Heart right ventricle (tissue), 16 donors: ENCODE measurements at regions of chr17 and their contacts with region 1.

Region 1: DNA sequence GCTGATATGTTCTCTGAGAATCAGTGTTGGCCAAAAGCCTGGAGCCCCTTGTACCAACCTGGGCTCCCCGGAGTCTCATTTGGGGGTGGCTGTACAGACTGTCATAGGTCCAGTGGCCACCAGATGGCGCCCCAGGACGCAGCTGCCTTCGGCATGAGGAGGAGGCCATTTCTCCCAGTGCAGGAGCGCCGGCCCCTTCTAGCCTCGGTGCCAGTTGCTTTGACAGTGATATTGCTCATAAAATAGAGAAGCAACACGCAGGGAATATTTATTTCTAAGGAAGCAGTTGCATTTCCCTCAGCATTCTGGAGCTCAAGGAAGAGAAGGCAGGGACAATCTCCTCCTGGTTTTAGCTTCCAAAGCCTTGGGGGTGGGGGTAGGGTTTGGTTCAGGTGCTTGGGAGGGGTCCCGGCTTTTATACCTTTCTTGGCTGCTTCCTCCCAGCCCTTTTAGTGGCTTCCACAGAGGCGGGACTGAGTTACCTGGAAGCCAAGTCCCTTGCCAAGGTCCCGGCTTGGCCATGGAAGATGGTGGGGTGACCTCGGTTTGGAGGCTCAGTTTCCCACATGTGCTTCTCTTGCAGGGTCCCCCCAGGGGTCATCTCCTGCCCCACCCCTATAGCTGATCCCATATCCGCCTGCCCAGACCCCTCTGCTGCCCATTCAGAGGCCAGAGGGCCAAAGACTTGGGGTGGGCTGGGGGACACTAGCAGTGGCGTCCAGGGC is 117.8 kb upstream of the CDC42EP4 start:
- DNase-seq: peak; percentile 85 to 90
- ATAC-seq: peak; percentile 90 to 95 (median 94)
- H3K4me3 ChIP-seq: no peak overlapping the region
- H3K27ac ChIP-seq: no peak overlapping the region
- H3K4me1 ChIP-seq: peaks cover 0 to 15% (median 8%) of the 10 kb centered on the region in 9 donors
- H3K27me3 ChIP-seq: peaks cover 0 to 4% (median 0%) of the 10 kb centered on the region in 7 donors
- CTCF ChIP-seq: peak; percentile 95 to 99 (median 98)

Region 2: DNA sequence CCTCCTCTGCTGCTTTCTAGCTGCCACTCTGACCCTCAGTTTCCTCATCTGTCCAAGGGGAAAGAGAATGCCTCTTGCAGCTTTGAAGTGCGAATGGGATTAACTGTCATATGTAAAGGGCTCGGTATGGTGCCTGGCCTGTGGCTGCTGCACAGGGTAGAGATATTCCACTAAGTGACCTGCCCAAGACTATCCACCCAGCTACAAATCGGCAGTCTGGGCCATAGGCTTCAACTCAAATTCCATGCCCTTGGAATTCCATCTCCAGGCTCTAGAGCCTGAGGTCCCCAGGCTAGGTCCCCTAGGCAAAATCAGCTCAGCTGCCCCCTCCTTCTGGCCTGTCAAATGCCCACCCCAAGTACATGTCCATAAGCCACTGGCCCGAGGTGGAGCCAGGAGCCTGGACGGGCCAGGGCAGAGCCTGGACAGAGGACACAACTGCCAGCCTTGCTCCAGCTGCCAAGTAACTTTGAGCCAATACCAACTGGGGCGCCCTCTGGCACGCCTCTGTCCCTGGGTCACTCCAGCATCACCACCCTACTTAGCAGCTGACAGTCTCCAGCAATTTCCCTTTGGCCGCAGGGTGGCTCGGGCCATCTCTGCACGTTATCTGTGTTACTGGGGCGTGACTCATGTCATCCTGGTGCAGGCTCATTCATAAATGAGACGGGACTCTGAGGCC is 157.5 kb after region 1 on chr17:
- intact Hi-C with region 1: loop called in 1 of 10 experiments (anchors 5 kb)
- DNase-seq: peak; percentile 51 to 60
- ATAC-seq: peak; percentile 72 to 94 (median 90)
- H3K4me3 ChIP-seq: no peak overlapping the region
- H3K27ac ChIP-seq: no peak overlapping the region
- H3K4me1 ChIP-seq: peaks cover 0 to 12% (median 5%) of the 10 kb centered on the region in 9 donors
- H3K27me3 ChIP-seq: no peaks in the 10 kb centered on the region
- CTCF ChIP-seq: peak in 3 of 9 donors; percentile 6 to 23 (median 7)

Region 3: GRCh38 chr17:73710095-73710592 is 280.5 kb after region 1 on chr17:
- intact Hi-C with region 1: loop called (anchors 1 to 10 kb)
- DNase-seq: peak; percentile 60 to 72
- ATAC-seq: peak; percentile 82 to 97 (median 94)
- H3K4me3 ChIP-seq: no peak overlapping the region
- H3K27ac ChIP-seq: no peak overlapping the region
- H3K4me1 ChIP-seq: peaks cover 0 to 10% (median 5%) of the 10 kb centered on the region in 9 donors
- H3K27me3 ChIP-seq: peaks cover 0 to 50% (median 20%) of the 10 kb centered on the region in 7 donors
- CTCF ChIP-seq: peak; percentile 67 to 89 (median 82)

Region 4: GRCh38 chr17:73841431-73842060 is 411.9 kb after region 1 on chr17:
- intact Hi-C with region 1: loop called in 3 of 10 experiments (anchors 10 kb)
- DNase-seq: no peak
- ATAC-seq: peak in 6 of 8 donors; percentile 56 to 68 (median 64)
- H3K4me3 ChIP-seq: no peak overlapping the region
- H3K27ac ChIP-seq: no peak overlapping the region
- H3K4me1 ChIP-seq: no peaks in the 10 kb centered on the region
- H3K27me3 ChIP-seq: peaks cover 0 to 22% (median 9%) of the 10 kb centered on the region in 7 donors
- CTCF ChIP-seq: peak in 8 of 9 donors; percentile 40 to 70 (median 60)

Region 5: GRCh38 chr17:74176546-74177001 is 747.0 kb after region 1 on chr17:
- intact Hi-C with region 1: loop called (anchors 1 to 10 kb)
- DNase-seq: peak; percentile 44 to 51
- ATAC-seq: peak; percentile 76 to 91 (median 86)
- H3K4me3 ChIP-seq: no peak overlapping the region
- H3K27ac ChIP-seq: no peak overlapping the region
- H3K4me1 ChIP-seq: no peaks in the 10 kb centered on the region
- H3K27me3 ChIP-seq: peaks cover 0 to 69% (median 59%) of the 10 kb centered on the region in 7 donors
- CTCF ChIP-seq: peak; percentile 60 to 83 (median 77)